ENCODE measurements at regions of chr10 and their contacts with region 1.

Region 1: DNA sequence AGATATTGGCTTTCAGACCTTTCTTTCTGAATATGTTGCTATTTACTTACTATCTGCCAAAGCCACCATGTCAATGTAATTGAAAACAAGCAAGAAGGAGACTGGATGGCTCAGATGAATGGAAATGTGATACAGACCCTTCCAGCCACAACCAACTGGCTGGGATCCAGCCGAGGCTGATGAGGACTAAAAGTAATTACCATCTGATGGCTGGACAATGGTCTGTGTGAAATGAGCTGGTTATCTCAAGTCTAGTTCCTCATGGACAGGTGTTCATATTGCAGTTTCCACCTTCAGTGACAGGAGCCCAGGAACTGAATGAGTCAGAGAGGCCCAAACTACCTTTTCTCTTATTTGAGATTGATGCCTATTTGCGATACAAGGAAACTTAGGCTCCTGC is 267.5 kb downstream of the GATA3 start:
- DNase-seq: no peak
- H3K4me3 Mint-ChIP-seq: no peak overlapping the region
- H3K27ac Mint-ChIP-seq: no peak overlapping the region
- H3K4me1 Mint-ChIP-seq: peaks cover 30% of the 10 kb centered on the region
- H3K27me3 Mint-ChIP-seq: peaks cover 2% of the 10 kb centered on the region

Region 2: DNA sequence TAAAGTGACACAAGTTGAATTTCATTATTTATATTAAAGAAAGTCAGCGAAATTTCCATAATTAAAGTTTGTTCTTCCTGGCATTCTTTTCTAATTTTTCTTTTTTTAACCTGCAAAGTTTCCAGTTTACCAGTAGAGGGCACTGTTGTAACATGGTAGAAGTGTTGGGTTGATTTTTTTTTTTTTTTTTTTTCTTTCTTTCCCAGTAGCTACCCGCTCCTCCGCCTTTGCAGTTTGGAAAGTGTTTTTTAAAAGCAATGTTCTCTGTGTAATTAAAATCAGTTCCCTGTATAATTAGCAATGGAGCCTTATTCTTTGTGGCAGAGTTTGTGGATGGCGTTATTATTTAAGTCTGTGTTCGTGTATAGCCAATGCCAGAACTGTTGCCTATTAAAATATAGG is 449.9 kb before region 1 on chr10:
- intact Hi-C with region 1: loop called (anchors 10 kb)
- DNase-seq: no peak
- H3K4me3 Mint-ChIP-seq: peak overlapping the region; percentile 63
- H3K27ac Mint-ChIP-seq: no peak overlapping the region
- H3K4me1 Mint-ChIP-seq: peaks cover 7% of the 10 kb centered on the region
- H3K27me3 Mint-ChIP-seq: no peaks in the 10 kb centered on the region

Region 3: GRCh38 chr10:8065651-8066050 is 256.3 kb before region 1 on chr10:
- intact Hi-C with region 1: loop called (anchors 1 kb)
- DNase-seq: peak; percentile 62
- H3K4me3 Mint-ChIP-seq: peak overlapping the region; percentile 77
- H3K27ac Mint-ChIP-seq: peak overlapping the region; percentile 82
- H3K4me1 Mint-ChIP-seq: peaks cover 81% of the 10 kb centered on the region
- H3K27me3 Mint-ChIP-seq: no peaks in the 10 kb centered on the region

Region 4: GRCh38 chr10:8245131-8245813 is 76.7 kb before region 1 on chr10:
- intact Hi-C with region 1: loop called (anchors 1 kb)
- DNase-seq: peak; percentile 77
- H3K4me3 Mint-ChIP-seq: peak overlapping the region; percentile 67
- H3K27ac Mint-ChIP-seq: peak overlapping the region; percentile 88
- H3K4me1 Mint-ChIP-seq: peaks cover 55% of the 10 kb centered on the region
- H3K27me3 Mint-ChIP-seq: no peaks in the 10 kb centered on the region

Region 5: DNA sequence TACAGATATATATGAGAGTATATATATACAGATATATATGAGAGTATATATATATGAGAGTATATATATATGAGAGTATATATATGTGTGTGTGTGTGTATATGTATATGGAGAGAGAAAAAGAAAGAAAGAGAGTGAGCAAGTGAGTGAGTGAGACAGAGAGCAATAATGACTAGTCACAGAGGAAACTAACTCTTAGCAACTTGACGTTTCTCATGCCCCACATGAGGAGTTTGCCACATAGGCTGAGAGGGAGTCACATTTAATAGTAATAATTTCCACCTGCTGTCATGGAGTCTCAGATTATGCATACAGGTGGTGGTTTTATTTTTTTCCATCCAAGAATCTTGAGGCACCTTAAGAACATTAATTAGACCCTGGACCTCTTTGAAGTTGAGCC is 67.6 kb before region 1 on chr10:
- intact Hi-C with region 1: loop called (anchors 1 kb)
- DNase-seq: no peak
- H3K4me3 Mint-ChIP-seq: peak overlapping the region; percentile 7
- H3K27ac Mint-ChIP-seq: peak overlapping the region; percentile 77
- H3K4me1 Mint-ChIP-seq: peaks cover 34% of the 10 kb centered on the region
- H3K27me3 Mint-ChIP-seq: no peaks in the 10 kb centered on the region

Region 6: DNA sequence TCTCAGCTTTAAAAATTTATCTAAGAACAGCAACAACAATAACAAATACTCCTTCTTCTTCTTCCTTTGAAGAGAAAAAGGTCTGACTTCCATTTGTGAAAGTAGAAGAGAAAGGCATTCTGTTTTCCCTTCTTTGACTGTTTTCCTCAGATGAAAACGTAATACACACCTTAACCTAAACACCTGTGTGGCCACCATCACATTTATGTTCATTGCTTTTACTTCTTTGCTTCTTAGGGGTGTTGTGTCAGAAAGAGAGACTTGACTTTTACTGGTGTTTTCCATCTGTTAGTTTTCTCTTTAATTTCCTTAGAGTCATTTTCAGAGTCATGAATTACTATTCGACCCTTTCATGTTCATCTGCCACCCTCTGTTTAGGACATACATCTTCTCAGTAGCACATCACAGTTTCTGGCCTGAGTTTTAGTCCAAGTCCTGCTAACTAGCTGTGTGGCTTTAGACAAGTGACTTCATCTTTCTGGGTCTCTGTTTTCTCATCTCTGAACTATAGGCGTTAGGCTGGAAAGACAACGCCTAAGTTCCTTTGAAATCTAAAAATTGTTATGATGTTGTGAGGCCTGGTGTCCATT is 16.3 kb after region 1 on chr10:
- intact Hi-C with region 1: loop called (anchors 1 kb)
- DNase-seq: no peak
- H3K4me3 Mint-ChIP-seq: peak overlapping the region; percentile 39
- H3K27ac Mint-ChIP-seq: peak overlapping the region; percentile 91
- H3K4me1 Mint-ChIP-seq: peaks cover 15% of the 10 kb centered on the region
- H3K27me3 Mint-ChIP-seq: peaks cover 10% of the 10 kb centered on the region

Region 7: GRCh38 chr10:8360365-8360764 is 38.4 kb after region 1 on chr10:
- intact Hi-C with region 1: loop called (anchors 1 kb)
- DNase-seq: no peak
- H3K4me3 Mint-ChIP-seq: peak overlapping the region; percentile 13
- H3K27ac Mint-ChIP-seq: peak overlapping the region; percentile 61
- H3K4me1 Mint-ChIP-seq: peaks cover 32% of the 10 kb centered on the region
- H3K27me3 Mint-ChIP-seq: peaks cover 12% of the 10 kb centered on the region

Measured in activated CD4-positive, alpha-beta T cell treated with anti-CD3 and anti-CD28 coated beads, Interleukin-2, amount 10 ng/mL, durations not matched to agents 24 days and 14 days (primary cell).